ENCODE measurements at regions of chr19 and their contacts with region 1.

Region 1: GRCh38 chr19:50383852-50384684 is at the start of gene POLD1:
- DNase-seq: peak; percentile 95
- H3K4me3 ChIP-seq: peak within 1 kb of the TSS; percentile 57 to 90 (median 74)
- H3K27ac ChIP-seq: peak within 1 kb of the TSS; percentile 70
- H3K4me1 ChIP-seq: peaks cover 6% of the 10 kb centered on the region
- H3K27me3 ChIP-seq: no peaks in the 10 kb centered on the region
- CTCF ChIP-seq: no peak
- total RNA-seq, gene POLD1: 16.3 to 49.8 TPM

Region 2: GRCh38 chr19:50147462-50148423 is 236.3 kb before region 1 on chr19:
- CTCF ChIA-PET with region 1: interaction called, 10 read pairs
- dilution Hi-C with region 1: no loop called
- in situ Hi-C with region 1: no loop called
- intact Hi-C with region 1: no loop called
- DNase-seq: peak; percentile 87
- H3K4me3 ChIP-seq: peak overlapping the region; percentile 30 to 58 (median 51)
- H3K27ac ChIP-seq: no peak overlapping the region
- H3K4me1 ChIP-seq: no peaks in the 10 kb centered on the region
- H3K27me3 ChIP-seq: no peaks in the 10 kb centered on the region
- CTCF ChIP-seq: peak in 1 of 2 donors; percentile 36